Posterior vena cava (tissue), 2 donors: ENCODE measurements at regions of chr2 and their contacts with region 1.

Region 1: DNA sequence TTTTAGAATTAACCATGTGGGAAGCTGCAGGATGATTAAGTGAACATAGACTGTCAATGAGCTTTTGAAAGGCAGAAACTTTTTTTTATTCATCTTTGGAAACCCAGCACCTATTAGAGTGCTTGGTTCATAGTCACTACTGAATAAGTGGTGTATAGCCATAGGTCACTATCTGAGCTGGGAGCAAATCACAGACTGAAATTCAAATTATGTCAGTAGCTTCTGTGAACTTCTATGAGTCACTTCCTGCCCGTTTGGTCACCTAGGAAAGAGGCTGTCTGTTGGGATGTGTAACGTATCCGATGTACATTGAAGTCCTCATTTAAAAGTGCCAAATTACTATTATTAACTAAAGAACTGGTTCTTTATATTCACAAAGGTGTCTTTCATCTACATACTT is 20.5 kb upstream of the SLC40A1 start:
- DNase-seq: no peak

Region 2: GRCh38 chr2:189587780-189588179 is 13.3 kb before region 1 on chr2:
- intact Hi-C with region 1: loop called in 1 of 2 experiments (anchors 1 kb)
- DNase-seq: no peak